Endothelial cell of umbilical vein (primary cell): ENCODE measurements at regions of chr16 and their contacts with region 1.

Region 1: GRCh38 chr16:80526425-80527061 is 14.2 kb upstream of the DYNLRB2 start:
- DNase-seq: peak; percentile 66
- H3K4me3 ChIP-seq: no peak overlapping the region
- H3K27ac ChIP-seq: no peak overlapping the region
- H3K4me1 ChIP-seq: no peaks in the 10 kb centered on the region
- H3K27me3 ChIP-seq: peaks cover 6 to 26% of the 10 kb centered on the region in 2 experiments
- CTCF ChIP-seq: peak; percentile 63 to 75
- POLR2A ChIP-seq: no peak

Region 2: GRCh38 chr16:79071424-79071823 is 1455.1 kb before region 1 on chr16:
- CTCF ChIA-PET with region 1: no interaction called
- POLR2A ChIA-PET with region 1: no interaction called
- dilution Hi-C with region 1: no loop called
- intact Hi-C with region 1: no loop called
- DNase-seq: no peak
- H3K4me3 ChIP-seq: no peak overlapping the region
- H3K27ac ChIP-seq: no peak overlapping the region
- H3K4me1 ChIP-seq: no peaks in the 10 kb centered on the region
- H3K27me3 ChIP-seq: no peaks in the 10 kb centered on the region
- CTCF ChIP-seq: no peak
- POLR2A ChIP-seq: no peak

Region 3: DNA sequence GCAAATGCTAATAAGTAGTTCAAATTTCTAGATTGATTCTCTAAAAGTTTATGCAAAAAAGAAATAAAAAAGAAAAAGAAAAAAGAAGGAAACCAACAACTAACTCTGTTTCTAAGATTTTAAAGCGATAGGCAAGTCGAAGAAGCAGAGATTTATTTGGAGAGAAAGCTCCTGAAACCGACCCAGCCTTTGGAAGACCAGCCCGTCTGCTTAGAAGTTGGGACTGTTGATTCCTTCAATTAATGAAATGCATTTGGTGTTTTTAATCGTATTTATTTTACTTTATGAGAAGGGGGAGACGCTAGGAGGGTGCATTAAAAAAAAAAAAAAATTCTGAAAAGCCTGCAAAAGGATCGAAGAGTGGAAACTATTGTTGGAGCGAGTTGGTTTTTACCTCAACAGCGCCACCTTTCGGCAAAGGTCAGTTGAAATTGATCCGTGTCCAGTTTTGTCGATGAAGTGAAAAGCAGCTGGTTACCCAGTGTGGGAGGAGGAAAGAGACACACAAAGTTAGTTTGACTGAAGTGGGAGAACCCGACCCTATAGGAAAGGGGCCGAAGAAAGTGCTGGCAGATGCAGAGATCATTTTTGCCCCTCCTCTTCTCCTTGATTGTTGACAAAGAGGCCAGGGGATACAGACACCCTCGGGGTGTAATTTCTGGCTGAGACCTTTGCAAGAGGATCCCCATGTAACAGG is 924.5 kb before region 1 on chr16:
- CTCF ChIA-PET with region 1: interaction called, 5 read pairs
- POLR2A ChIA-PET with region 1: no interaction called
- dilution Hi-C with region 1: no loop called
- intact Hi-C with region 1: loop called (anchors 5 kb)
- DNase-seq: peak; percentile 64
- H3K4me3 ChIP-seq: no peak overlapping the region
- H3K27ac ChIP-seq: no peak overlapping the region
- H3K4me1 ChIP-seq: no peaks in the 10 kb centered on the region
- H3K27me3 ChIP-seq: peaks cover 22 to 33% of the 10 kb centered on the region in 2 experiments
- CTCF ChIP-seq: peak; percentile 68 to 74
- POLR2A ChIP-seq: no peak

Region 4: GRCh38 chr16:80503107-80503506 is 23.4 kb before region 1 on chr16:
- CTCF ChIA-PET with region 1: interaction called, 10 read pairs
- POLR2A ChIA-PET with region 1: no interaction called
- dilution Hi-C with region 1: no loop called
- intact Hi-C with region 1: no loop called
- DNase-seq: no peak
- H3K4me3 ChIP-seq: no peak overlapping the region
- H3K27ac ChIP-seq: no peak overlapping the region
- H3K4me1 ChIP-seq: no peaks in the 10 kb centered on the region
- H3K27me3 ChIP-seq: no peaks in the 10 kb centered on the region
- CTCF ChIP-seq: no peak
- POLR2A ChIP-seq: no peak

Region 5: GRCh38 chr16:80816365-80816764 is 289.8 kb after region 1 on chr16:
- CTCF ChIA-PET with region 1: interaction called, 17 read pairs
- POLR2A ChIA-PET with region 1: no interaction called
- dilution Hi-C with region 1: no loop called
- intact Hi-C with region 1: no loop called
- DNase-seq: no peak
- H3K4me3 ChIP-seq: no peak overlapping the region
- H3K27ac ChIP-seq: no peak overlapping the region
- H3K4me1 ChIP-seq: no peaks in the 10 kb centered on the region
- H3K27me3 ChIP-seq: no peaks in the 10 kb centered on the region
- CTCF ChIP-seq: no peak
- POLR2A ChIP-seq: no peak

Region 6: DNA sequence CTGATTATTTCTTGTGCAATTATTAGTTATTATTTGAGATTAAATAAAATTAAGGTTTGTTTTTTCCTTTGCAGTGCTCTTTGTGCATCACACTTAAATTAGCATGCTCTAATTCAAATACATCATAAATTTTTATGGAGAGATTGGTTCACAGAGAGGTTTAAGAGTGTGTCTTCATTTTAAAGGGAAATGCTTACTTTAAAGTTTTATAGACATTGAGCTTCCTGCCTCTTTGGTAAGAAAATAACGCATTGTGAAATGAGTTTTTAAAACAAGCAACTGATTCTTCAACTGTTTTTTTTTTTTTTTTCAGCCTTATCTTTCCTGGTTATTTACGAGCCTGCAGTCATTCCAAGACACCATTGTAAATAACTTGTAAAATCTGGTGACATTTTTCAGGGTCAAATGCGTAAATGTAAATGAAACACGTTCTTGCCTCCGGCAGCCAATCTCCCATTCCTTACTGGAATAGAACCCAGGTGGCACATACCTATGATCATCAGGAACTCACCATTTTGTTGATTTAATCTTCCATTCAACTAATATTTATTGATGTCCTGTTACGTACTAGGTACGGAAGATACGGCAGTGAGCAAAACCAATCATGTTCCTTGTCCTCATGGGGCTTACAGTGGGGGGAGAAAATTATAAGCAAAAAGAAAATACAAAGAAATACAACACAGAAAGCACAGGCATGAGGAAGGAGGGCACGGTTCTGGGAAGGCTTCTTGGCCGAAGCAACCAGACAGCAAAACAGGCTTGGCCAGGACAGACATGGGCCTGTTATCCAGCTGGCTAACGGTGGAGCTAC is 311.1 kb after region 1 on chr16:
- CTCF ChIA-PET with region 1: interaction called, 13 read pairs
- POLR2A ChIA-PET with region 1: no interaction called
- dilution Hi-C with region 1: no loop called
- intact Hi-C with region 1: no loop called
- DNase-seq: no peak
- H3K4me3 ChIP-seq: no peak overlapping the region
- H3K27ac ChIP-seq: no peak overlapping the region
- H3K4me1 ChIP-seq: no peaks in the 10 kb centered on the region
- H3K27me3 ChIP-seq: peaks cover 4 to 5% of the 10 kb centered on the region in 2 experiments
- CTCF ChIP-seq: no peak
- POLR2A ChIP-seq: no peak

Region 7: GRCh38 chr16:81737885-81738786 is 1211.6 kb after region 1 on chr16:
- CTCF ChIA-PET with region 1: no interaction called
- POLR2A ChIA-PET with region 1: no interaction called
- dilution Hi-C with region 1: no loop called
- intact Hi-C with region 1: loop called (anchors 5 kb)
- DNase-seq: peak; percentile 81
- H3K4me3 ChIP-seq: peak overlapping the region in 1 of 3 experiments; percentile 40
- H3K27ac ChIP-seq: no peak overlapping the region
- H3K4me1 ChIP-seq: peaks cover 4% of the 10 kb centered on the region
- H3K27me3 ChIP-seq: no peaks in the 10 kb centered on the region
- CTCF ChIP-seq: peak; percentile 77 to 83
- POLR2A ChIP-seq: no peak

Region 8: GRCh38 chr16:81838794-81839193 is 1312.3 kb after region 1 on chr16:
- CTCF ChIA-PET with region 1: no interaction called
- POLR2A ChIA-PET with region 1: no interaction called
- dilution Hi-C with region 1: no loop called
- intact Hi-C with region 1: no loop called
- DNase-seq: peak; percentile 69
- H3K4me3 ChIP-seq: no peak overlapping the region
- H3K27ac ChIP-seq: no peak overlapping the region
- H3K4me1 ChIP-seq: peaks cover 7% of the 10 kb centered on the region
- H3K27me3 ChIP-seq: no peaks in the 10 kb centered on the region
- CTCF ChIP-seq: no peak
- POLR2A ChIP-seq: no peak